ENCODE measurements at regions of chr2 and their contacts with region 1.

Region 1: DNA sequence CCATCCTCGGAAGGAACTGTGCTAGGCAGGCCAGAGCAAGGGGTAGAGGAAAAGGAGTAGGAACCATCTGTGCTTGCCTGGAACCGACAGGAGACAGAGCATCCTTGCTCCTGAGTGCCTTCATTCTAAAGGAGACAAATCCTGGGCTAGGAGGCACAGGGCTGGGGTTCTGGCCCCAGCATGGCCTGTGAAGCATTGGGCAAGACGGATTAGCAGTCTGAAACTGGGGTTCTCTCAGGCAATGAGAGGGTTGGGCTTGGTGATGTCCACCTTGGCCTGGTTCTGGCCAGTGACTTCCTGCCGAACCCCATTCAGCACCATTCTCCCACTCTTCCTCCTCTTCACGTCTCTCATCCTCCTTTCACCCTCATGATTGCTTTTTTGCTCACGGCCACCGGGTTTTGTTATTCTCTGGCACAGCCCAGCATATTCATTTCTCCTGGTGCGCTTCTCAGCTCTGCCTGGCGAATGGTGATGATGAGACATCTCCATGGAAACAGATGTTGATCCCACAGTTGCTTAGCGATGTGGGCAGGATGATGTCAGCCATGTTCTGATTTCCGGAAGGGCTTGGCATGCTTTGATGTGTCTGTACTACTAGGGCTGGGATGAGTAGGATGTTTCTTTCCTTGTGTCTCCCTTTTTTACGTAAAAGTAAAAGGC is 127.7 kb downstream of the CAPN13 start:
- DNase-seq: peak; percentile 50
- H3K4me3 Mint-ChIP-seq: no peak overlapping the region
- H3K27ac Mint-ChIP-seq: no peak overlapping the region
- H3K4me1 Mint-ChIP-seq: no peaks in the 10 kb centered on the region
- H3K27me3 Mint-ChIP-seq: peaks cover 7% of the 10 kb centered on the region

Region 2: DNA sequence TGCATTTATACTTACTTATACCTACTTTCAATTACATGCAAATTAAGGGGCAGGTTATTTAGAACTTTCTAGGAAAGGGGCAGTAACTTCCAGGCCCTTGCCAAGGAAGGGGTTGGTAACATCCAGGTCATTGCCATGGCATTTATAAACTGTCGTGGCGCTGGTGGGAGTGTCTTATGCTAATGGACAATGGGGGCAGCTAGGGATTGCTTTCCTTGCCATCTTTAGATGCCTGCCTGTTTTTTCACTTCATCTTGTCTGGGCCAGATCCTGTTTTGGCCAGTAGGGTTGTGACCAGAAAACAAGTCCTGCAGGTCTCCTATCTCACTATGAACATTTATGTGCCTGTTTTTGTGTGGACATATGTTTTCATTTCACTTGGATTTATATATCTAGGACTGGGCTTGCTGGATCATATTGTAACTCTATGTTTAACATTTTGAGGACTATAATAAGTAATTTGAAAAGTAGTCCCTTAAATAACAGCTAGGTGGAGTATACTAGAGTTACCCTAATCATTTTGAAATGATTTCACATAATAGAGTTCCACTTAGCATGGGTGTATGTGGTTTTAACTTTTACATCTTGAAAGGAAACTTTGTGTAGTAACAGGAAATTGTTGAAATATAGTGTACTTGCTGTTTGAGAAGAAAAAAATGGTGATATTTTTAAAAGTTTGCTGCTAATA is 176.4 kb before region 1 on chr2:
- intact Hi-C with region 1: loop called (anchors 10 kb)
- DNase-seq: no peak
- H3K4me3 Mint-ChIP-seq: no peak overlapping the region
- H3K27ac Mint-ChIP-seq: peak overlapping the region; percentile 21
- H3K4me1 Mint-ChIP-seq: peaks cover 22% of the 10 kb centered on the region
- H3K27me3 Mint-ChIP-seq: no peaks in the 10 kb centered on the region

Measured in activated CD4-positive, alpha-beta T cell treated with anti-CD3 and anti-CD28 coated beads, Interleukin-2, amount 10 ng/mL, durations not matched to agents 24 days and 14 days (primary cell).